Activated T-helper 1 cell treated with anti-CD3 and anti-CD28 coated beads, Interleukin-12 subunit alpha, Interleukin-12 subunit beta, Interleukin-2, Interleukin-4 antibody, amounts not matched to agents 30 ng/mL and 10 ng/mL and 1 ng/mL, durations not matched to agents 14 hours and 24 hours and 36 hours (primary cell): ENCODE measurements at regions of chr1 and their contacts with region 1.

Region 1: GRCh38 chr1:155466996-155467395 is 95.6 kb downstream of the ASH1L start:
- DNase-seq: no peak
- H3K4me3 Mint-ChIP-seq: peak overlapping the region; percentile 15
- H3K27ac Mint-ChIP-seq: peak overlapping the region; percentile 76
- H3K4me1 Mint-ChIP-seq: peaks cover 57% of the 10 kb centered on the region
- H3K27me3 Mint-ChIP-seq: no peaks in the 10 kb centered on the region

Region 2: DNA sequence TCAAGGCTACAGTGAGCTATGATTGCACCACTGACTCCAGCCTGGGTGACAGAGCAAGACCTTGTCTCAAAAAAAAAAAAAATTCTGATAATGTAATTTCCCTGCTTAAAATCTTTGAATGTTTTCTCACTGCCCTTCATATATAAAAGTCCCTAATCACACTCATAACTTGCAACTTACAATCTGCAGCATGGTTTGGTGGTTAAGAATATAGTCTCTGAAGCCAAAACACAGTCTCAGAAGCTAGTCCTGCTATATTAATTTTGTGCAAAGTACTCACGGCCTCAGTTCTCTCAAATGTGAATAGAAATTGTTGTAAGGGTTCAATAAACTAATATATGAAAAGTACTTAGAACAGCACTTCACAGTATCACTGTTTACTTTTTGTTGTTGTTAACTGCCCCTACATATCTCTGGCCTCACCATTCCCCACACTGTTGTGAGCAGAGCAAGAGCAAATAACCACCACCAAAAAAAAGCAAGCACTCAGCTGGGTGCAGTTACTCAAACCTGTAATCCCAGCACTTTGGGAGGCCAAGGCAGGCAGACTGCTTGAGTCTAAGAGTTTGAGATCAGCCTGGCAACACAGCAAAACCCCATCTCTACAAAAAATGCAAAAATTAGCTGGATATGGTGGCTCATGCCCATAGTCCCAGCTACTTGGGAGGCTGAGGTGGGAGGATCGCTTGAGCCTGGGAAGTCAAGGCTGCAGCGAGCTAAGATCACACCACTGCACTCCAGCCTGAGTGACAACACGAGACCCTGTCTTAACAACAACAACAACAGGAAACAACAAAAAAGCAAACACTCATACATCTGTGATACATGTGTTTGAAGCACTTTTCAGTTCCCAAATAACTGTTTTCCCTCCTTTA is 73.2 kb after region 1 on chr1:
- intact Hi-C with region 1: loop called (anchors 2 kb)
- DNase-seq: no peak
- H3K4me3 Mint-ChIP-seq: peak overlapping the region; percentile 49
- H3K27ac Mint-ChIP-seq: peak overlapping the region; percentile 93
- H3K4me1 Mint-ChIP-seq: peaks cover 54% of the 10 kb centered on the region
- H3K27me3 Mint-ChIP-seq: no peaks in the 10 kb centered on the region